ENCODE measurements at regions of chr1 and their contacts with region 1.

Region 1: DNA sequence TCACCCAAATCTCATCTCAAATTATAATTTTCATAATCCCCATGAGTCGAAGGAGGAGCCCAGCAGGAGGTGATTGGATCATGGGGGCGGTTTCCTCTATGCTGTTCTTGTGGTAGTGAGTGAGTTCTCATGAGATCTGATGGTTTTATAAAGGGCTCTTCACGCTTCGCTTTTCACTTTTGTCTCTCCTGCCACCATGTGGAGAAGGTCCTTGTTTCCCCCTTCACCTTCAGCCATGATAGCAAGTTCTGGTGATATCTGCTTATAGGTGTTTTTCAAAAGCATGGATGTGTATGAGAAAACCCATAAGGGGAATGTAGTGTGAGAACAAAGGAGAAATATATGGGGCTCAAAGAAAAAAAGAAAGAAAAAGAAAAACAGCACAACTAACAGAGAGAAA is 405.9 kb upstream of the RGS18 start:
- DNase-seq: no peak
- H3K4me3 Mint-ChIP-seq: no peak overlapping the region
- H3K27ac Mint-ChIP-seq: no peak overlapping the region
- H3K4me1 Mint-ChIP-seq: no peaks in the 10 kb centered on the region
- H3K27me3 Mint-ChIP-seq: no peaks in the 10 kb centered on the region

Region 2: DNA sequence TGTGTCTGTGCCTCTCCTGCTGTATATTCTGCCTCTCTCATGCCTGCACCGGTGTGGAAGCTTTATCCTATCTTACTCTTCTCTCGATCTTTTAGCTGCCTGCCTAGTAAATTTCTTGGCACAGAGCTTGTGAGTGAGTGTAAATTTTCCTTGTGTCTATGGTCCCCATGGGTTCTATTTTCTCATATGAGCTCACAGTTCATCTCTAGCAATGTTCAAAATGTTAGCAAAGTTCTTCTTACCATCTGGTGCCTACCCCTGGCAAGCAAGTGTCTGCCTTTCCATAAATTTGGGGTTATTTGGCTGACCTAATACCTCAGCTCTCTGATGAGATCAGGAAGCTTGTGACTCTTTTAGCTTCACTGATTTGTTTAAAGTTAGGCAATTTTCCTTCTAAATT is 702.6 kb before region 1 on chr1:
- CTCF ChIA-PET with region 1: no interaction called
- POLR2A ChIA-PET with region 1: no interaction called
- intact Hi-C with region 1: loop called (anchors 5 kb)
- DNase-seq: no peak
- H3K4me3 Mint-ChIP-seq: no peak overlapping the region
- H3K27ac Mint-ChIP-seq: no peak overlapping the region
- H3K4me1 Mint-ChIP-seq: no peaks in the 10 kb centered on the region
- H3K27me3 Mint-ChIP-seq: no peaks in the 10 kb centered on the region

Measured in activated CD4-positive, alpha-beta memory T cell treated with anti-CD3 and anti-CD28 coated beads for 36 hours (primary cell).